CD8-positive, alpha-beta T cell (primary cell): ENCODE measurements at regions of chr22 and their contacts with region 1.

Region 1: GRCh38 chr22:22463855-22464540 is 44.5 kb downstream of the ZNF280B start:
- DNase-seq: peak in 8 of 9 experiments; percentile 21 to 73 (median 48)
- ATAC-seq: no peak
- H3K4me3 ChIP-seq: no peak overlapping the region
- H3K4me3 Mint-ChIP-seq: no peak overlapping the region
- H3K27ac ChIP-seq: no peak overlapping the region
- H3K27ac Mint-ChIP-seq: no peak overlapping the region
- H3K4me1 ChIP-seq: no peaks in the 10 kb centered on the region
- H3K4me1 Mint-ChIP-seq: no peaks in the 10 kb centered on the region
- H3K27me3 ChIP-seq: peaks cover 0 to 4% of the 10 kb centered on the region in 2 experiments
- H3K27me3 Mint-ChIP-seq: peaks cover 34% of the 10 kb centered on the region
- CTCF ChIP-seq: peak; percentile 78

Region 2: GRCh38 chr22:22576244-22576988 is 112.4 kb after region 1 on chr22:
- CTCF ChIA-PET with region 1: interaction called, 11 read pairs
- POLR2A ChIA-PET with region 1: no interaction called
- intact Hi-C with region 1: no loop called
- DNase-seq: peak in 5 of 9 experiments; percentile 5 to 39 (median 33)
- ATAC-seq: no peak
- H3K4me3 ChIP-seq: no peak overlapping the region
- H3K4me3 Mint-ChIP-seq: no peak overlapping the region
- H3K27ac ChIP-seq: no peak overlapping the region
- H3K27ac Mint-ChIP-seq: no peak overlapping the region
- H3K4me1 ChIP-seq: no peaks in the 10 kb centered on the region
- H3K4me1 Mint-ChIP-seq: no peaks in the 10 kb centered on the region
- H3K27me3 ChIP-seq: no peaks in the 10 kb centered on the region
- H3K27me3 Mint-ChIP-seq: peaks cover 13% of the 10 kb centered on the region
- CTCF ChIP-seq: peak; percentile 67

Region 3: GRCh38 chr22:22587577-22588188 is 123.7 kb after region 1 on chr22:
- CTCF ChIA-PET with region 1: interaction called, 17 read pairs
- POLR2A ChIA-PET with region 1: no interaction called
- intact Hi-C with region 1: loop called (anchors 2 to 5 kb)
- DNase-seq: no peak
- ATAC-seq: no peak
- H3K4me3 ChIP-seq: no peak overlapping the region
- H3K4me3 Mint-ChIP-seq: no peak overlapping the region
- H3K27ac ChIP-seq: no peak overlapping the region
- H3K27ac Mint-ChIP-seq: no peak overlapping the region
- H3K4me1 ChIP-seq: no peaks in the 10 kb centered on the region
- H3K4me1 Mint-ChIP-seq: no peaks in the 10 kb centered on the region
- H3K27me3 ChIP-seq: no peaks in the 10 kb centered on the region
- H3K27me3 Mint-ChIP-seq: peaks cover 23% of the 10 kb centered on the region
- CTCF ChIP-seq: no peak

Region 4: GRCh38 chr22:22687638-22688500 is 223.9 kb after region 1 on chr22:
- CTCF ChIA-PET with region 1: no interaction called
- POLR2A ChIA-PET with region 1: no interaction called
- intact Hi-C with region 1: loop called in 1 of 2 experiments (anchors 5 kb)
- DNase-seq: peak in 3 of 9 experiments; percentile 16 to 54 (median 45)
- ATAC-seq: no peak
- H3K4me3 ChIP-seq: no peak overlapping the region
- H3K4me3 Mint-ChIP-seq: no peak overlapping the region
- H3K27ac ChIP-seq: no peak overlapping the region
- H3K27ac Mint-ChIP-seq: no peak overlapping the region
- H3K4me1 ChIP-seq: no peaks in the 10 kb centered on the region
- H3K4me1 Mint-ChIP-seq: no peaks in the 10 kb centered on the region
- H3K27me3 ChIP-seq: no peaks in the 10 kb centered on the region
- H3K27me3 Mint-ChIP-seq: no peaks in the 10 kb centered on the region
- CTCF ChIP-seq: peak; percentile 31